ENCODE measurements at regions of chr16 and their contacts with region 1.

Region 1: DNA sequence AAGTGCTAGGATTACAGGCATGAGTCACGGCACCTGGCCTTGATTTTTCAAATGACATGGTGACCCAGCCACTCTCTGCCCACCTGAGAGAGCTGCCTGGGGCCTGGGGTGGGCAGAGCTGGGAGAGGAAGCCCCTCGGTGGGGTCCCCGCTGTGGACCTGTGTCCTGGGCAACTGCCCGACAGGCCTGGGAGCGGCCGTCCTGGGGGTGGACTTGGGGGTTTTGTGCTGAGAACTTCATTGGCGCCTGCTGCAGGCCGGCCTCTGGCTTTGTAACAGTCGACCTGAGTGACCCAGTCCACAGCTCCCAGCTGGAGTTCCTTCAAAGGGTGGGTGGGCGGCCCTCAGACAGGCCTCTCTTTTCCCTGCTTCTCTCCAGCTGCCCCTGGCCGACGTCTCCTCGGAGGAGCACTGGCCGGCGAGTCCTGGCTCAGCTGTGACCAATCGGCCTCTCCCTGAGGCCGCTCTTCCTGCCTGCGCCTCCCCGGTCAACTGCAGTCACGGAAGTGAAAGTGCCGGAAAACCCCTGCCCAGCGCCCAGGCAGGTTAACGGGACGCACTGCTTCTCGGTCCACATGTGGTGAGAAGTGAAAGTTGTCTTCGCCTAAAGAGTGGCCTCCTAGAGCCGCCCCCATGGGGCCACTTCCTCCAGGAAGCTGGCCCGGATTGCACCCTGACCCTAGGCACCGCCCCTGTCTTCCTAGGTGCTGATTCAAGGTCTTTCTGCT is 5.5 kb downstream of the CBFA2T3 start:
- DNase-seq: peak; percentile 61
- ATAC-seq: peak; percentile 33

Region 2: DNA sequence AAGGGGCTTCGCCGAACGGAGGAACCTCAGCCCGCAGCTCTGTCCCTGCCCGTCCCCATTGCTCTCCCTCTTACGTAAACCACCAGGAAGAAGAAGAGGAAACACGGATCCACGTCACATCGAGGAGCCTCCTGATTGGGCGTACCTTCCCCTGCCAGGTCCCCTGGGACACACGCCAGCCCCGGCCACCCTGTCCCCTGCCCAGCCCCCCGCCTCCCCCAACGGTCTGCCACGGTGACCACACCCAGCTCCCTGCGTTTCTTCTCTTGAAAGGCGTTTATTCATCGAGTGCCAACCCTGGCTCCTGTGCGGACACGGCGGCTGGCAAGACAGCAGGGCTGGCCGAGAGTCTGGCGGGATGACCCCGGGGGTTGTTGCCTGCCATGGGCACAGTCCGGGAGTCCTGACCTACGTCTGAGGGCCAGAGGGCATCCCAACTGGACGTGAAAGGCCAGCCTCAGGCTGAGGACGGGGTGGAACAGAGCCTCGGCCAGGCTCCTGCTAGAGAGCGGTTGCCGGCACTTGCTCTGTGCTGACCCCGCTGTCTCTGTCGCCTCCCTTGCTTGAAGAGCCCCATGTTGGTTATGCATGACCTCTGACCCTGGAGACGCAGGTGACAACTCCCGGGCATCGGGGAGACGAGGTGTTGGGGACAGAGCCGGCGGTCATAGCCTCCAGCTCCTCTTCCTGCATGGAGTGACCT is 81.5 kb after region 1 on chr16:
- intact Hi-C with region 1: no loop called
- DNase-seq: no peak
- ATAC-seq: no peak

Region 3: GRCh38 chr16:89071686-89072547 is 100.4 kb after region 1 on chr16:
- intact Hi-C with region 1: loop called (anchors 5 kb)
- DNase-seq: peak; percentile 51
- ATAC-seq: peak; percentile 78

Region 4: GRCh38 chr16:89720813-89721545 is 749.4 kb after region 1 on chr16 and contains the starts of genes VPS9D1 and ZNF276:
- intact Hi-C with region 1: no loop called
- DNase-seq: peak; percentile 94
- ATAC-seq: peak; percentile 85
- total RNA-seq, gene VPS9D1: 13.7 TPM
- total RNA-seq, gene ZNF276: 12.2 TPM